Right ventricle myocardium inferior (tissue), 1 donor: ENCODE measurements at regions of chr12 and their contacts with region 1.

Region 1: GRCh38 chr12:67648521-67649260 is at the start of gene DYRK2:
- DNase-seq: peak; percentile 93
- ATAC-seq: peak; percentile 77
- total RNA-seq, gene DYRK2: 51.2 TPM

Region 2: DNA sequence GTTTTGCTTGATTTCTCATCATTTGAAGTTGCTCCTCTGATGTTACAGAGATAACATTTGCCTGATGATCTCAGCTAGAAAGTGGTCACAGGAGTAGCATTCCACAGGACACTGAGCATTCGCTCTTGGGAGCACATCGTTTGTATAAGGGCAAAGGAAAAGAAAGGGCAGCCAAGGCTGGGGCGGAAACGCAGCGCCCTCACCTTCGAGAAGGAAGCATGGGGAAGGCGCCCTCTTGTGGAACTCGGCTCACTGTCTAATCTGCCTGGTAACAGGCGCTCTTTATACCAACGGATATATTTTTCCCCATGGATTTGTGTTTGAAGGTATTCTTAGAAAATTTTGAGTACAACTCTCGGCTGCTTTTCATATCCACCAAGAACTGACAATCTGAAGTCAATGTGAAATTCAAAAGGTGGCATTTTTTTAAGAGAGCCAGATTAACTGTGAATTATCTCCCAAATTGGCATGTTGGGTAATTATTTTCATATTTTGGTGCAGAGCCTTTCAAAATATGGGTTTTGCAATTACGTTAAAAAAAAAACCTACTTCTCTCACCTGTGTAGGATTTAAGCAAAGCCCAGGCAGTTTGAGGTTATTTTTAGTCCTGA is 206.8 kb before region 1 on chr12:
- intact Hi-C with region 1: loop called (anchors 2 kb)
- DNase-seq: peak; percentile 90
- ATAC-seq: peak; percentile 97

Region 3: GRCh38 chr12:67524861-67525616 is 123.7 kb before region 1 on chr12:
- intact Hi-C with region 1: loop called (anchors 5 kb)
- DNase-seq: no peak
- ATAC-seq: peak; percentile 80

Region 4: GRCh38 chr12:67788118-67788517 is 139.4 kb after region 1 on chr12:
- intact Hi-C with region 1: loop called (anchors 5 kb)
- DNase-seq: no peak
- ATAC-seq: peak; percentile 31

Region 5: DNA sequence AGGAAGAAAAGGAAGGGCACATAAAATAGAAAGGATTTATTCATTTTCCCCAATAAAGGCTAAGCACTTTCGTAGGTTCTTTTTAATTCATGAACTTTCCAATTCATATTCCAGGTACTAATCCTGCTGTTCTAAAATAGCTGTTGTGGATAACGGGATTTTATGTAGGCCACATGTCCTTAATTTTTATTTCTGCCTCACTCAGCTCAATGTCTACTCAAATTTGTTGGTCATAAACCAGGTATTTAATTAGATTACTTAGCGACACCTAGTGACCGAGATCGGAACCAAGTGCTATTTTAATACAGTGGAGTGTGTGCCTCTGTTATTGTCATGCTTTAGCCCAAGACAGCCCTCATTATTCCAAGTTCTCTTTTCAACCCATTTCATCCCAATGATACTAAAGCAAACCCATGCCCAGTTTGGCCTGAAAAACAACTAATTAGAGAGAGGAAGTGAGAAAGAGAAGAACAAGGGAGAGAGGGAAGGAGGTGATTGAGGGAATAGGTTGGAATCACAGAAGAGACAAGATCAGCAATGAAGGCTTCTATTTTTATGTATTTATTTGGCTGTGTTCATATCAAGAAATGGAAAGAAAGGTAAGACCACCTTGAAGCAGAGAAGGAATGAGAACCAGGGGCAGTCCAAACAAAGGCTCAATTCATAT is 294.7 kb after region 1 on chr12:
- intact Hi-C with region 1: loop called (anchors 2 kb)
- DNase-seq: no peak
- ATAC-seq: peak; percentile 75